Mammary epithelial cell (primary cell): ENCODE measurements at regions of chr3 and their contacts with region 1.

Region 1: DNA sequence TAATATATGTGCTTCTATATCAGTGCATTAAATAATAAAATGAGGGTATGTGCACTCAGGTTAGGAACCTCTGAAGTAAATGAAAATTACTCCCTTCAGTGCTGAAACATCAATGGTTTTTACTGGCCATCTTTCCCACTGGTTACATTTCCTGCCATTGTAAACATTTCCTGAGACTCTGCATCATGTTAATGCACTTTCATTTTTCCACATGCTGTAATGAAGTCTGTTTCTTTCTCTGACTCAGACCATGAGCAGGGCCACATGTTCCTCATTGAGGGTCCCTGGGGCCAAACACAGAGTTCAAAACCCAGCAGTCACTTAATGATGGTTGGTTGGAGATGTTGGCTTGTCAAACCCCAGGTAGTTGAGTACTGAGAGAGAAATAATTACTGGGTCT is 15.3 kb downstream of the FAM3D start:
- DNase-seq: no peak
- H3K4me3 ChIP-seq: no peak overlapping the region
- H3K27ac ChIP-seq: no peak overlapping the region
- H3K4me1 ChIP-seq: no peaks in the 10 kb centered on the region
- H3K27me3 ChIP-seq: no peaks in the 10 kb centered on the region
- CTCF ChIP-seq: no peak

Region 2: DNA sequence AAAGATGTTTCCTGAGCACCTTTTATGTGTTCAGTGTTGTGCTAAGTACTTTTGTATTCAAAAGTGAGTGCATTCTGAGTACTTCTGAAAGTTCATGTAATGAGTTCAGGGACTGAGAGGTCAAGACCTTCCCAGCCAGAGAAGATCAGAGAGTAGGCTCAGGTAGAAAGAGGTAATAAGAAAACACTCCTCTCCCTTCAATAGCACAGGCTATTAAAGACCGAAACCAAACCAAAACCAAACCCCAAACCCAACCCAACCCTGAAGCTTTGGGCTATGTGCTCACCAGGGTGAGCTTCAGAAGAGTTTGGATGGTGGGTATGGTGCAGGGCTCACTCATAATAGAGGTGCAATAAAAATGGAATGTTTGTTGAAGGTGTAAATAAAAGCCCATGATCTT is 92.0 kb after region 1 on chr3:
- CTCF ChIA-PET with region 1: no interaction called
- dilution Hi-C with region 1: loop called (anchors 5 kb)
- in situ Hi-C with region 1: no loop called
- intact Hi-C with region 1: no loop called
- DNase-seq: no peak
- H3K4me3 ChIP-seq: no peak overlapping the region
- H3K27ac ChIP-seq: no peak overlapping the region
- H3K4me1 ChIP-seq: no peaks in the 10 kb centered on the region
- H3K27me3 ChIP-seq: no peaks in the 10 kb centered on the region
- CTCF ChIP-seq: no peak